HEK293 (cell line): ENCODE measurements at regions of chr19 and their contacts with region 1.

Region 1: DNA sequence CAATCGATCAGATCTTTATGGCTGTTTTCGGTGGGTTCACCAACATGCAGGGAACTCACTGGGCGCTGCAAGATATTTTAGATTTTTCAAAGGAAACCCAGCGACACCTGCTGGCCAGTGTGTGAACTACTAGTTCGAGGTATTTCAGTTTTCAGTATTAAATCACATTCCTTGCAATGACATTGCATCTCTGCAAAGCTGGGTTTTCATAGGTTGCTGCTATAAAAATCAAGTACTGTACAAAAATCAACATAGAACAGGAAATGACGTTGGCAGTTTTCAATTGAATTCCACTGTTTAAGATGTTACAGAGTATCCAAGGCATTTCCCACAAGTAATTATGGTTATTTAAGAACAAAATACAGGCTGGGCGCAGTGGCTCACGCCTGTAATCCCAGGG is 17.6 kb downstream of the LIG1 start:
- H3K4me3 ChIP-seq: no peak overlapping the region
- H3K27ac ChIP-seq: no peak overlapping the region
- H3K4me1 ChIP-seq: no peaks in the 10 kb centered on the region
- CTCF ChIP-seq: peak; percentile 36; the same call in 1 of the 2 replicates

Region 2: DNA sequence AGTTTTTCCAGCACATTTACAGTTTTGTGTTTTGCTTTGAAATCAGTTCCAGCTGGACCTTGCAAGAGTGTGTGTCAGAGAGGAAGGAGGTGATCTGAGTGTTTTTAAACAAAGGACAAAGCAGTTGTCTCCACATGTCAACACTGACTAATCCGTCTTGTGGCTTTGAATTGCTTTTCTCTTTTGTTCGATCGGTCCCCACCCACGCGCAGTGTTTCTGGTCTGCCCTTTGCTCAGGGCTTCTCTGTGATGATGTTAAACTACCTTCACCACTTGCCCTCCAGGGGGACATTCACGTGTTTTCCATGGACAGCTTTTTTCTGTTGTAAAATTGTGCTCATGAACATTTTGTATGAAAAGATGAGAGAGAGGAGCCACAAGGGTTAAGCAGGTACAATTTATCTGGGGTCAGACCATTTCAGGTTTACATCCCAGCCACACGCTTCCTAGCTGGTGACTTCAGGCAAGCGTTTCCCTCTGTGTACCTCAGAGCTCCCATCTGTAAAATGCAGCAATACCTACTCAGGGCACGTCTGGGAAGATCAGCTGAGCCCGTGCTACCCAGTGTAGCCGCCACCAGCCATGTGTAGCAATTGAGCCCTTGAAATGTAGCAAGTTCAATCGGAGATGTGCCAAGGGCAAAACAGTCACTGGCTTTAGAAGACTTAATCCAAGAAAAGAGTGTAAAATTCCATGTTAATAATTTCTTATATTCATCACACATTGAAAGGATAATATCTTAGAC is 28.5 kb before region 1 on chr19:
- CTCF ChIA-PET with region 1: interaction called, 10 read pairs
- POLR2A ChIA-PET with region 1: no interaction called
- H3K4me3 ChIP-seq: no peak overlapping the region
- H3K27ac ChIP-seq: no peak overlapping the region
- H3K4me1 ChIP-seq: no peaks in the 10 kb centered on the region
- CTCF ChIP-seq: no peak